CD4-positive, alpha-beta memory T cell (primary cell): ENCODE measurements at regions of chr5 and their contacts with region 1.

Region 1: GRCh38 chr5:95781101-95781583 is 41.4 kb downstream of the GLRX start:
- DNase-seq: peak; percentile 62 to 73 (median 71)
- H3K4me3 ChIP-seq: no peak overlapping the region
- H3K4me3 Mint-ChIP-seq: peak overlapping the region in 7 of 8 donors; percentile 18 to 84 (median 72)
- H3K27ac ChIP-seq: no peak overlapping the region
- H3K27ac Mint-ChIP-seq: peak overlapping the region in 3 of 7 donors; percentile 9 to 82 (median 24)
- H3K4me1 ChIP-seq: no peaks in the 10 kb centered on the region
- H3K4me1 Mint-ChIP-seq: peaks cover 2 to 7% (median 6%) of the 10 kb centered on the region in 4 donors
- H3K27me3 ChIP-seq: no peaks in the 10 kb centered on the region
- H3K27me3 Mint-ChIP-seq: peaks cover 0 to 2% of the 10 kb centered on the region in 2 donors

Region 2: GRCh38 chr5:95646554-95647431 is 134.3 kb before region 1 on chr5 and contains the start of gene RFESD:
- CTCF ChIA-PET with region 1: interaction called, 71 read pairs
- POLR2A ChIA-PET with region 1: interaction called, 8 read pairs
- intact Hi-C with region 1: loop called (anchors 1 kb)
- DNase-seq: peak; percentile 91 to 95 (median 92)
- H3K4me3 ChIP-seq: peak within 1 kb of the TSS; percentile 71 to 94
- H3K4me3 Mint-ChIP-seq: peak within 1 kb of the TSS; percentile 87 to 93 (median 89)
- H3K27ac ChIP-seq: peak within 1 kb of the TSS; percentile 84
- H3K27ac Mint-ChIP-seq: peak within 1 kb of the TSS; percentile 57 to 94 (median 93)
- H3K4me1 ChIP-seq: peaks cover 31% of the 10 kb centered on the region
- H3K4me1 Mint-ChIP-seq: peaks cover 20 to 42% (median 26%) of the 10 kb centered on the region in 4 donors
- H3K27me3 ChIP-seq: no peaks in the 10 kb centered on the region
- H3K27me3 Mint-ChIP-seq: no peaks in the 10 kb centered on the region
- total RNA-seq, gene RFESD: 9.1 to 9.3 TPM

Region 3: GRCh38 chr5:95770830-95771708 is 10.1 kb before region 1 on chr5:
- CTCF ChIA-PET with region 1: interaction called, 63 read pairs
- POLR2A ChIA-PET with region 1: interaction called, 3 read pairs
- intact Hi-C with region 1: no loop called
- DNase-seq: no peak
- H3K4me3 ChIP-seq: no peak overlapping the region
- H3K4me3 Mint-ChIP-seq: peak overlapping the region in 1 of 8 donors; percentile 21
- H3K27ac ChIP-seq: no peak overlapping the region
- H3K27ac Mint-ChIP-seq: no peak overlapping the region
- H3K4me1 ChIP-seq: no peaks in the 10 kb centered on the region
- H3K4me1 Mint-ChIP-seq: no peaks in the 10 kb centered on the region
- H3K27me3 ChIP-seq: no peaks in the 10 kb centered on the region
- H3K27me3 Mint-ChIP-seq: peaks cover 0 to 2% of the 10 kb centered on the region in 2 donors

Region 4: DNA sequence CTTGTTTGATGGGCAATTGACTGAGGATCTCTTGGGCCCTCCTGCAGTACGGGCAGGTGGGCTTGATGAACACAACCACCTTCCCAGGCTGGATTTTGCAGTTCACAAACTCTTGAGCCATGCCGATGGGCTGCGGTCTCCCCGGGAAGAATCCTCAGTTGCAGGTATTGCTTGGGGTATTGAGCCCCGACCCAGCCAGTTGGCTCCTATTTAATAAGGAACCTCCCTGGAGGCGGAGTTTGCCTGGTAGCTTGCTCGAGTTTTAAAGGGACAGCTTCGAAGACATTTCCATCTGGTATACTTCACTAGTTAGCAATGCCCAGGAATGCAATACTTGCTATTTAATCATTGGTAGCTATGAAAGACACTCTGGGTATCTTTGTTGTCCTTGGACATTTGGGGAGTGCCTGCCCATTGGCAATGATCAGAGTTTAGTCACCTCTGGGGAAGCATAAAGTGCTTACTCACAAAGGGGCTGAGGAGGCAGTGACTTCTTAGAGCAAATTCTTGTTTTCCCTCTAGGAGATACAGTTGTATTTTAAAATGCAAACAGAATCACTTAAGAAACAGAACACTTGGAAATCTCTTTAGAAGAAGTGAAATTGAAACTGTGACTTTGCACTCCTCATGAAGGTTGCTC is 41.5 kb after region 1 on chr5 and contains the start of gene GLRX:
- CTCF ChIA-PET with region 1: interaction called, 100 read pairs
- POLR2A ChIA-PET with region 1: interaction called, 17 read pairs
- intact Hi-C with region 1: no loop called
- DNase-seq: peak; percentile 56 to 71 (median 64)
- H3K4me3 ChIP-seq: peak within 1 kb of the TSS; percentile 89 to 91
- H3K4me3 Mint-ChIP-seq: peak within 1 kb of the TSS; percentile 98 to 100 (median 99)
- H3K27ac ChIP-seq: peak within 1 kb of the TSS; percentile 79
- H3K27ac Mint-ChIP-seq: peak within 1 kb of the TSS; percentile 76 to 99 (median 97)
- H3K4me1 ChIP-seq: peaks cover 72% of the 10 kb centered on the region
- H3K4me1 Mint-ChIP-seq: peaks cover 55 to 87% (median 60%) of the 10 kb centered on the region in 4 donors
- H3K27me3 ChIP-seq: no peaks in the 10 kb centered on the region
- H3K27me3 Mint-ChIP-seq: no peaks in the 10 kb centered on the region
- total RNA-seq, gene GLRX: 73.9 to 75.9 TPM

Region 5: GRCh38 chr5:95858661-95859326 is 77.7 kb after region 1 on chr5:
- CTCF ChIA-PET with region 1: interaction called, 902 read pairs
- POLR2A ChIA-PET with region 1: no interaction called
- intact Hi-C with region 1: no loop called
- DNase-seq: peak; percentile 83 to 94 (median 84)
- H3K4me3 ChIP-seq: peak overlapping the region in 1 of 2 donors; percentile 7
- H3K4me3 Mint-ChIP-seq: peak overlapping the region; percentile 32 to 75 (median 54)
- H3K27ac ChIP-seq: no peak overlapping the region
- H3K27ac Mint-ChIP-seq: peak overlapping the region in 6 of 7 donors; percentile 21 to 86 (median 65)
- H3K4me1 ChIP-seq: peaks cover 13% of the 10 kb centered on the region
- H3K4me1 Mint-ChIP-seq: peaks cover 13 to 34% (median 25%) of the 10 kb centered on the region in 4 donors
- H3K27me3 ChIP-seq: no peaks in the 10 kb centered on the region
- H3K27me3 Mint-ChIP-seq: peaks cover 0 to 4% of the 10 kb centered on the region in 2 donors